OCI-LY7 (cell line): ENCODE measurements at regions of chr2 and their contacts with region 1.

Region 1: DNA sequence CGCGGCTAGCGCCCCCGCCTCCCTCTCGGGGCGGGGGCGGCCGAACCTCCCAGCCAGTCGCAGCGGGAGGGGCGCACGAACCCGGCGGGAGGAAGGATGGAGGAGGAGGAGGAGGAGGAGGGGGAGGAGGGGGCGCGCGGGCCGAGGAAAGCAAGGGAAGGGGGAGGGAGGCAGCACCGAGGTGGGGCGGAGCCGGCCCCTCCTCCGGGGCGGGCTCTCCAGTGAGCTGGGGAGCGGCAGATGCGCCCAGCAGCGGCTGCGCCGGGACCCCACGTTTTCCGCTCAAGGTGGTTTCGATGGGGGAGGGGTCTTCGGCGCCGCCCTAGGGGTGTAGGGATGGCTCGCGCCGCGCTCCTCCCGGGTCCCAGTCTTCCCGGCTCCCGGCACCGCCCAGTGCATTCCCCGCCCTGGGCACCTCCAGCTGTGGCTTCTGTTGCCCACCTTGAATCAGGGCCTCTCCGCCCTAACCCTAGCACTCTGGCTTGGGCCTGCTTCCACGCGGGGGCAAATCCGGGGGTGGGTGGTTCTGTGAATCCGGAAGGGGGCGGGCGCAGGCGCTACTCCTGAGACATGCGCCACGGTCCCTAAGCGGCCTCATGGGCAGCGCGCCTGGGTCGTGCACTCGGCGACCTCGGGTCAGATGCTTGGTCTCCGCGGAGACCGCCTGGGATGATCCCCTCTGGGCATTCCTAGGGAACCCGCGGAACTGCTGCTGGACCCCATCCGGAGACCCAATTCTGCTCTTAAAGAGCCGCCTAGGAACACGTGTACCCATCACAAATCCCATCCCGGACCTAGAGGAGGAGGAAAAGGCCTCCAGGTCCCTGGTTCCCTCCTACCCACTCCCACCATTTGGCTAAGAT is at the start of gene FBXO41:
- DNase-seq: peak; percentile 92
- H3K4me3 ChIP-seq: peak within 1 kb of the TSS; percentile 97
- H3K27ac ChIP-seq: peak within 1 kb of the TSS; percentile 96
- H3K4me1 ChIP-seq: peaks cover 31% of the 10 kb centered on the region
- CTCF ChIP-seq: no peak
- total RNA-seq, gene FBXO41: 17.0 and 20.4 TPM in 2 replicates

Region 2: GRCh38 chr2:73071360-73072133 is 213.0 kb before region 1 on chr2 and contains the start of gene SFXN5:
- CTCF ChIA-PET with region 1: no interaction called
- POLR2A ChIA-PET with region 1: no interaction called
- intact Hi-C with region 1: loop called (anchors 5 kb)
- DNase-seq: peak; percentile 93
- H3K4me3 ChIP-seq: peak within 1 kb of the TSS; percentile 82
- H3K27ac ChIP-seq: peak within 1 kb of the TSS; percentile 59
- H3K4me1 ChIP-seq: peaks cover 8% of the 10 kb centered on the region
- CTCF ChIP-seq: no peak
- total RNA-seq, gene SFXN5: 4.5 and 7.8 TPM in 2 replicates

Region 3: GRCh38 chr2:73212448-73213176 is 71.9 kb before region 1 on chr2:
- CTCF ChIA-PET with region 1: no interaction called
- POLR2A ChIA-PET with region 1: interaction called, 4 read pairs
- intact Hi-C with region 1: loop called (anchors 1 kb)
- DNase-seq: peak; percentile 79
- H3K4me3 ChIP-seq: no peak overlapping the region
- H3K27ac ChIP-seq: no peak overlapping the region
- H3K4me1 ChIP-seq: peaks cover 25% of the 10 kb centered on the region
- CTCF ChIP-seq: peak; percentile 94

Region 4: DNA sequence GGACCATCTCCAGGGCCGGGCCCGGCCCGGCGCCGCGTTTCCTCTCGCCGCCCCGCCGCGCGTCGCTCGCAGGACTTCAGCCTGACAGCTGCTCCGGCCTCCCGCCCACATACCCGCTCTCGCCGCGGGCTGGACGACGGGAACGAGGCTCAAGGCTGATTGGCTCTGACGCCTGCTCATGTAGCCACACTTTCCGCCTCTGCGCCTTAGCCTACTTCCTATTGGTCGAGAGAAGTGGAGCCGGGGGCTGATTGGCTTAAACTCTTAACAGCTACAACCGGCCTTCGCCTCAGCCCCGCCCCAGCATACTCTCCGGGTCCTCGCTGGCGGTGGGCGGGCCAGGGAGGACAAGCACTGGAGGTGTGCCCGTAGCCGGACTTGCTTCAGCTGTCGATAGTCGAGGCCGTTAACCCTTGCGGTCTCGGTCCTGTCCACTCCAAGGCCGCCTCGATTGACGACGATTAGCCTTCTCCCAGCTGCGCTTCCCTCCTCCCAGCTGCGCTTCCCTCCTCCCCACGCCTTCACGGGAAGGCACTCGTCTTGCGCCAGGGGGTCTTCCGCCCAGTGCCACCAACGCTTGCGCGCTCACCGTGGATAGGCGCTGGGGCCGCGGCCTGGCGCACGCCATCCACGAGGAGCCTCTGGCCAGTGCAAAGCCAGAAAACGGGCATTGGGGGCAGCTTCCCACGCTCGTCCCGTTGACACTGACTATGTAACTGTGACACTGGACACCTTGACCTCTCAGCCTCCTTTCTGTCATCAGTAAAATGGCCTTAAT is 51.2 kb before region 1 on chr2 and contains the start of gene PRADC1:
- CTCF ChIA-PET with region 1: no interaction called
- POLR2A ChIA-PET with region 1: interaction called, 10 read pairs
- intact Hi-C with region 1: loop called (anchors 1 kb)
- DNase-seq: peak; percentile 99
- H3K4me3 ChIP-seq: peak within 1 kb of the TSS; percentile 93
- H3K27ac ChIP-seq: peak within 1 kb of the TSS; percentile 78
- H3K4me1 ChIP-seq: peaks cover 27% of the 10 kb centered on the region
- CTCF ChIP-seq: no peak
- total RNA-seq, gene PRADC1: 25.3 and 25.9 TPM in 2 replicates

Region 5: GRCh38 chr2:73385595-73386341 is 101.2 kb after region 1 on chr2 and contains the start of gene ALMS1:
- CTCF ChIA-PET with region 1: no interaction called
- POLR2A ChIA-PET with region 1: interaction called, 10 read pairs
- intact Hi-C with region 1: loop called (anchors 1 kb)
- DNase-seq: peak; percentile 96
- H3K4me3 ChIP-seq: peak within 1 kb of the TSS; percentile 89
- H3K27ac ChIP-seq: peak within 1 kb of the TSS; percentile 84
- H3K4me1 ChIP-seq: peaks cover 18% of the 10 kb centered on the region
- CTCF ChIP-seq: 0 out of 2 replicates have a peak, but pooled peaks have one; percentile 24
- total RNA-seq, gene ALMS1: 57.8 and 58.7 TPM in 2 replicates

Region 6: DNA sequence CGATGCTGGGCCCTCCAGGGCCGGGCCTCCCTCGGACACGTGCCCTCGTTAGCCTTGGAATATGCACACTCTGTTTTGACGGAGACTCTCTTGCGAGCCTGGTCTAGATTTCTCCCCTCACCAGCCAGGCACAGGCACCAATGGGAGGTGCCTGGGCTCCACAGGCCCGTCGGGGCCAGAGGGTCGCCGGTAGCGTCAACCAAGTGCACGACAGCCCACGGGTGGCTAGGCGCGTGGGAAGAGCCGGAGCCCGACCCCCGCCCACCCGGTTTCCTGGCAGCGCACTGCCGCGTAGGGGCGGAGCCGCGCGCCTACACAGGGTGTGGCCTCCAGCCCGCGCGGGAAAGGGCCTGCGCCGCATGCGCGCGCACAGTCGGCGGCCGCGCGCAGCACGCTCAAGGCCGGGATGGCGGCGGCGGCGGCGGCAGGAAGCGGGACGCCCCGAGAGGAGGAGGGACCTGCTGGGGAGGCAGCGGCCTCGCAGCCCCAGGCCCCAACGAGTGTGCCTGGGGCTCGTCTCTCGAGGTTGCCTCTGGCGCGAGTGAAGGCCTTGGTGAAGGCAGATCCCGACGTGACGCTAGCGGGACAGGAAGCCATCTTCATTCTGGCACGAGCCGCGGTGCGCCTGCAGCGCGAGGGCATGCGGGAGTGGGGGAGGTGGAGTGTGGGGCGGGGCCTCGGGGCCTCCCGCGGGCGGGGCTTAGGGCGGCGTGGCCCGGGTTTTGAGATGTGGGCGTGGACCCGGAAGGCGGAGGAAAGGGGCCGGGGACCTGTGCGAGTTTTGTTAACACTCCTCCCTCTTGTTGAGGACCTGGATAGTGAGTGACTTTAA is 1674.0 kb after region 1 on chr2 and contains the start of gene POLE4:
- CTCF ChIA-PET with region 1: no interaction called
- POLR2A ChIA-PET with region 1: no interaction called
- intact Hi-C with region 1: loop called (anchors 5 kb)
- DNase-seq: peak; percentile 95
- H3K4me3 ChIP-seq: peak within 1 kb of the TSS; percentile 71
- H3K27ac ChIP-seq: peak within 1 kb of the TSS; percentile 79
- H3K4me1 ChIP-seq: peaks cover 18% of the 10 kb centered on the region
- CTCF ChIP-seq: no peak
- total RNA-seq, gene POLE4: 30.6 and 31.7 TPM in 2 replicates